ENCODE measurements at regions of chr7 and their contacts with region 1.

Region 1: DNA sequence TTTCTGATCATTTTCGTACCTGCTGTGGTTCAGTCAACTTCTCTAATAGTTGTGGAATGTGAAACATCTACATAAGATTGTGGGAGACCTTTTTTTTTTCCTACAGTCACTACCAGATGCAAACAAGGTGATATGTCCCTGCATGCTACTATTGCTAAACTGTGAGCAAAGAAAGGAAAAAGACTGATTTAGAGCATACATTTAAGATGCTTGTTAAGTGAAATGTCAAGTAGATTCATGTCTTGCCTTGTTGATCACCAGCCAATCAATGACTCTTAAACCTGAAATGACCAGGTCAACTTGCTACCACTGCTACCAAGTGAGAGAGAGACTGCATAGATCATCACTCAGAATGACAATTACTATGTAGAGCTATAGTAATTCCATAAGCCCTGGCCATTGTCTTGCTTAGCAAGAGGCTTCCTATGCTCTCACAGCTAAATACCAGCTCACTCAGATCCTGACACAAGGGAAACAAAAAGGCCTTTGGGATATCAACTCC is 84.3 kb upstream of the SKAP2 start:
- DNase-seq: no peak
- H3K4me3 ChIP-seq: no peak overlapping the region
- H3K27ac ChIP-seq: no peak overlapping the region
- H3K4me1 ChIP-seq: peaks cover 2% of the 10 kb centered on the region
- H3K27me3 ChIP-seq: no peaks in the 10 kb centered on the region
- CTCF ChIP-seq: no peak
- POLR2A ChIP-seq: no peak

Region 2: GRCh38 chr7:26574476-26574875 is 374.2 kb before region 1 on chr7:
- CTCF ChIA-PET with region 1: no interaction called
- POLR2A ChIA-PET with region 1: no interaction called
- dilution Hi-C with region 1: no loop called
- intact Hi-C with region 1: no loop called
- DNase-seq: no peak
- H3K4me3 ChIP-seq: no peak overlapping the region
- H3K27ac ChIP-seq: no peak overlapping the region
- H3K4me1 ChIP-seq: no peaks in the 10 kb centered on the region
- H3K27me3 ChIP-seq: peaks cover 0 to 2% of the 10 kb centered on the region in 2 experiments
- CTCF ChIP-seq: no peak
- POLR2A ChIP-seq: no peak

Region 3: GRCh38 chr7:26891400-26892355 is 57.0 kb before region 1 on chr7:
- CTCF ChIA-PET with region 1: no interaction called
- POLR2A ChIA-PET with region 1: no interaction called
- dilution Hi-C with region 1: no loop called
- intact Hi-C with region 1: loop called (anchors 5 kb)
- DNase-seq: no peak
- H3K4me3 ChIP-seq: no peak overlapping the region
- H3K27ac ChIP-seq: no peak overlapping the region
- H3K4me1 ChIP-seq: no peaks in the 10 kb centered on the region
- H3K27me3 ChIP-seq: no peaks in the 10 kb centered on the region
- CTCF ChIP-seq: no peak
- POLR2A ChIP-seq: no peak

Region 4: DNA sequence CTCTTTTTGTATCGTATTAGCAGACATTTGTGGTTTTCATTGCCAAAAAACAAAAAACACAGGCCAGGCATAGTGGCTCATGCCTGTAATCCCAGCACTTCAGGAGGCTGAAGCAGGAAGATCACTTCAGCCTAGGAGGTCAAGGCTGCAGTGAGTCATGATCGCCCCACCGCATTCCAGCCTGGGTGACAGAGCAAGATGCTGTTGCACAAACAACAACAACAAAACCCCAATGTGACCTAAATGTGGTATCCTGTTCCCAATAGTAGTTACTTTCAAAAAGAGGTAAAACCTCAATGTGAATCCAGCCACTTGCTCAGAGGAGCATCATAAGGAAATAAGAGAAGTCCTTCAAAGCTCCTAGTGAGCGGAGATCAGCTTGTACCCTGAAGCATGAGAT is 38.4 kb before region 1 on chr7:
- CTCF ChIA-PET with region 1: no interaction called
- POLR2A ChIA-PET with region 1: no interaction called
- dilution Hi-C with region 1: no loop called
- intact Hi-C with region 1: no loop called
- DNase-seq: peak; percentile 56
- H3K4me3 ChIP-seq: no peak overlapping the region
- H3K27ac ChIP-seq: peak overlapping the region; percentile 45
- H3K4me1 ChIP-seq: peaks cover 12% of the 10 kb centered on the region
- H3K27me3 ChIP-seq: no peaks in the 10 kb centered on the region
- CTCF ChIP-seq: no peak
- POLR2A ChIP-seq: no peak